AG04449 (cell line): ENCODE measurements at regions of chr6 and their contacts with region 1.

Region 1: GRCh38 chr6:55445648-55446204 is 118.5 kb downstream of the GFRAL start:
- DNase-seq: no peak
- H3K4me3 ChIP-seq: no peak overlapping the region
- CTCF ChIP-seq: peak; percentile 9

Region 2: GRCh38 chr6:55953335-55953734 is 507.6 kb after region 1 on chr6:
- CTCF ChIA-PET with region 1: interaction called, 45 read pairs
- POLR2A ChIA-PET with region 1: no interaction called
- DNase-seq: peak; percentile 7
- H3K4me3 ChIP-seq: no peak overlapping the region
- CTCF ChIP-seq: no peak